ENCODE measurements at regions of chr21 and their contacts with region 1.

Region 1: DNA sequence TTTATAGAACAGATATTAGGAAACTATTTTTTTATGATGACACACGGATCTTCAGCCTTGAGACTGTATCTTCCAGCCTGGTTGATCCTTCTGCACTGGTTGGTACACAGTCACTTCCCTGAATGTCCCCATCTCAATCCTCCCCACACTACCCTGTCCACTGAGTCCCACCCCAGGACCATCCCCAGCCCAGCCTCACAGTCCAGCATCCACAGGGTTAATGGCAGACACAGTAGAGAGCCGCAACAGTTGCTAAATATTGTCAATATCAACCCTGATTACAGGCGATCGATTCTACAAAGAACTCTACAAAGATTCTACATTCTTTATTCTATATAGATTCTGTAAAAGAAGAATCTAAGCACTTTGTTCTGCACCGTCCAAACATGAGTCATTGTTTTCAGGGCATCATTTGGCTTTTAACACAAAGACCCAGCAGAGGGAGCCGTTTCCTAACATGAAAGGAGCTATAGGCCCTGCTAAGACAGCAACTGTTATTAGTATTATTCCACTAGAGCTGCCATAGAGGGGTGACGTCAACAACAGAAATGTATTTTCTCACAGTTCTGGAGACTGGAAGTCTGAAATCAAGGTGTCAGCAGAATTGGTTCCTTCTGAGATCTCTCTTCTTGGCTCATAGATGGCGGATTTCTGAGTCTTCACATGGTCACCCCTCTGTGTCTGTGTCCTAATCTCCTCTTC is 30.1 kb upstream of the IFNAR2 start:
- DNase-seq: peak; percentile 64 to 85 (median 74)
- H3K4me3 ChIP-seq: no peak overlapping the region
- H3K4me3 Mint-ChIP-seq: no peak overlapping the region
- H3K27ac ChIP-seq: no peak overlapping the region
- H3K27ac Mint-ChIP-seq: peak overlapping the region in 5 of 8 donors; percentile 23 to 67 (median 55)
- H3K4me1 ChIP-seq: peaks cover 9% of the 10 kb centered on the region
- H3K4me1 Mint-ChIP-seq: peaks cover 21 to 41% (median 30%) of the 10 kb centered on the region in 3 donors
- H3K27me3 ChIP-seq: no peaks in the 10 kb centered on the region
- H3K27me3 Mint-ChIP-seq: no peaks in the 10 kb centered on the region

Region 2: DNA sequence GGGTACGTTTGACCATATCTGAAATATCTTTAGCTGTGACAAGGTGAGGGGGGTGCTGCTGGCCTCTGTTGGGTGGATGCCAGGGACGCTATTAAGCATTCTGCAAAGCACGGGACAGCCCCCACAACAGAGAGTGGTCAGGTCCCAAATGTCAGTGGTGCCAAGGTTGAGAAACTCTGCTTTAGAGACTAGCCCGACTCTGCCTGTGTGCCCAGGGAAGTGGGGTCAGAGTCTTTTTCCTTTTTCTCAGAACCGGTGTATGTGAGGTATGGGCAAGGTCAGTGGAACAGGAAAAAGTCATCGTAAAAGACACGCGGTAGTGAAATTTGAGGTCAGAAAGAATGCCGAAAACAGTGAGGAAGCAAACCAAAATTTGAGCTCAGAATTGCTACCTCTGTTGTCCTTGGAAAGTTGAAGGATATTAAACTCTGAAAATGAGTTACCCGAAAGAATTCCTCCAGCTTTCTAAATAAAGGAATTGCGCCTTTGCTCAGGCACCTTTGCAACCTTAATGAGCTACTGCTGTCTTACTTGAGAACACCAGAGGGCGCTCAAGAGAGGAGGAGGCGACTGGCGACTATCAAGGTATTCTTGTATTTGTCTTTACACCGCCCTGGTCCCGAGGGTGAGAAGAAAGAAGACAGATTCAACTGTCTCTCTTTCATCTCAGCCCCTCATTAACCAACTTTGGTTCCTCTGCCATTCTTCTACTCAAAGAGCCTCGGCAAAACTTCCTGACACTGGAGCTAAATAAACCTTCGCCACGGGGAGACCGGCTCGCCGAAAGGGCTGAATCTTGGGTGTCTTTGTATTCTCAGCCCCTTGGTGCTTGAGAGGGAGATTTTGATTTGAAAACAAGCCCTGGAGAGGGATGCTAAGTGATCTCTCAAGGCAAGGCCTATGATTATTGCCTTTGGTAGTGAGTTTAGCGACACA is 259.3 kb before region 1 on chr21:
- CTCF ChIA-PET with region 1: interaction called, 25 read pairs
- POLR2A ChIA-PET with region 1: no interaction called
- DNase-seq: peak in 4 of 5 donors; percentile 3 to 60 (median 38)
- H3K4me3 ChIP-seq: no peak overlapping the region
- H3K4me3 Mint-ChIP-seq: peak overlapping the region in 2 of 7 donors; percentile 15 to 16
- H3K27ac ChIP-seq: no peak overlapping the region
- H3K27ac Mint-ChIP-seq: no peak overlapping the region
- H3K4me1 ChIP-seq: no peaks in the 10 kb centered on the region
- H3K4me1 Mint-ChIP-seq: peaks cover 0 to 4% (median 4%) of the 10 kb centered on the region in 3 donors
- H3K27me3 ChIP-seq: no peaks in the 10 kb centered on the region
- H3K27me3 Mint-ChIP-seq: peaks cover 0 to 3% of the 10 kb centered on the region in 2 donors

Region 3: GRCh38 chr21:33185852-33186251 is 13.8 kb before region 1 on chr21:
- CTCF ChIA-PET with region 1: interaction called, 33 read pairs
- POLR2A ChIA-PET with region 1: no interaction called
- DNase-seq: peak in 2 of 5 donors; percentile 45 to 52
- H3K4me3 ChIP-seq: peak overlapping the region; percentile 45
- H3K4me3 Mint-ChIP-seq: peak overlapping the region in 6 of 7 donors; percentile 50 to 80 (median 58)
- H3K27ac ChIP-seq: no peak overlapping the region
- H3K27ac Mint-ChIP-seq: peak overlapping the region; percentile 11 to 93 (median 64)
- H3K4me1 ChIP-seq: peaks cover 28% of the 10 kb centered on the region
- H3K4me1 Mint-ChIP-seq: peaks cover 28 to 37% (median 32%) of the 10 kb centered on the region in 3 donors
- H3K27me3 ChIP-seq: no peaks in the 10 kb centered on the region
- H3K27me3 Mint-ChIP-seq: no peaks in the 10 kb centered on the region

Region 4: DNA sequence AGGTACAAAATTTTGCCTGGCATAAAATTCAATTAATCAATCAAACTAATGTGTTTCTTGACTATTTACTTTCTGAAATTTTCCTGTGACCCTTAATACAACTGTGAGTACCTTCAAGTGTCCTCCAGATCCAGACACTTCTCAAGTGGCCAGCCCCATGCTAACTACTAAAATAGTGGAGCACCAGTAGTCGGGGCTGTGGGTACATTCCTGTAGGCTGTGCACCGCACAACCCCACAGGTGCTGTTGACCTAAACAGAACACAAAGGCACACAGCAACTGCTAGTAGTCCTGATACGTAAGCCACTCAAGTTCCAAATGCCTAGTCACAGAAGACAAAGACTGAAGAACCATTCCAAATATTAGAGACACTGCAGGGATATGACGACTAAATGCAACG is 243.5 kb after region 1 on chr21:
- CTCF ChIA-PET with region 1: interaction called, 26 read pairs
- POLR2A ChIA-PET with region 1: interaction called, 4 read pairs
- DNase-seq: no peak
- H3K4me3 ChIP-seq: no peak overlapping the region
- H3K4me3 Mint-ChIP-seq: no peak overlapping the region
- H3K27ac ChIP-seq: no peak overlapping the region
- H3K27ac Mint-ChIP-seq: peak overlapping the region in 1 of 8 donors; percentile 79
- H3K4me1 ChIP-seq: no peaks in the 10 kb centered on the region
- H3K4me1 Mint-ChIP-seq: peaks cover 0 to 5% (median 3%) of the 10 kb centered on the region in 3 donors
- H3K27me3 ChIP-seq: no peaks in the 10 kb centered on the region
- H3K27me3 Mint-ChIP-seq: no peaks in the 10 kb centered on the region